IMR-90 (cell line): ENCODE measurements at regions of chr9 and their contacts with region 1.

Region 1: GRCh38 chr9:91193658-91194391 is 167.9 kb downstream of the AUH start:
- DNase-seq: peak; percentile 96
- ATAC-seq: peak; percentile 61
- H3K4me3 ChIP-seq: peak overlapping the region; percentile 15
- H3K27ac ChIP-seq: peak overlapping the region; percentile 94
- H3K4me1 ChIP-seq: peaks cover 37% of the 10 kb centered on the region
- H3K27me3 ChIP-seq: no peaks in the 10 kb centered on the region
- CTCF ChIP-seq: no peak
- POLR2A ChIP-seq: peak; percentile 64
- RAD21 ChIP-seq: peak; percentile 4

Region 2: GRCh38 chr9:91060503-91061343 is 133.1 kb before region 1 on chr9:
- CTCF ChIA-PET with region 1: no interaction called
- POLR2A ChIA-PET with region 1: no interaction called
- dilution Hi-C with region 1: no loop called
- in situ Hi-C with region 1: no loop called
- intact Hi-C with region 1: loop called (anchors 1 kb)
- DNase-seq: peak; percentile 99
- ATAC-seq: peak; percentile 68
- H3K4me3 ChIP-seq: no peak overlapping the region; the same call in 1 of the 2 replicates
- H3K27ac ChIP-seq: peak overlapping the region; percentile 89
- H3K4me1 ChIP-seq: peaks cover 26% of the 10 kb centered on the region
- H3K27me3 ChIP-seq: no peaks in the 10 kb centered on the region
- CTCF ChIP-seq: no peak
- POLR2A ChIP-seq: peak; percentile 55
- RAD21 ChIP-seq: no peak; the same call in 1 of the 2 replicates

Region 3: DNA sequence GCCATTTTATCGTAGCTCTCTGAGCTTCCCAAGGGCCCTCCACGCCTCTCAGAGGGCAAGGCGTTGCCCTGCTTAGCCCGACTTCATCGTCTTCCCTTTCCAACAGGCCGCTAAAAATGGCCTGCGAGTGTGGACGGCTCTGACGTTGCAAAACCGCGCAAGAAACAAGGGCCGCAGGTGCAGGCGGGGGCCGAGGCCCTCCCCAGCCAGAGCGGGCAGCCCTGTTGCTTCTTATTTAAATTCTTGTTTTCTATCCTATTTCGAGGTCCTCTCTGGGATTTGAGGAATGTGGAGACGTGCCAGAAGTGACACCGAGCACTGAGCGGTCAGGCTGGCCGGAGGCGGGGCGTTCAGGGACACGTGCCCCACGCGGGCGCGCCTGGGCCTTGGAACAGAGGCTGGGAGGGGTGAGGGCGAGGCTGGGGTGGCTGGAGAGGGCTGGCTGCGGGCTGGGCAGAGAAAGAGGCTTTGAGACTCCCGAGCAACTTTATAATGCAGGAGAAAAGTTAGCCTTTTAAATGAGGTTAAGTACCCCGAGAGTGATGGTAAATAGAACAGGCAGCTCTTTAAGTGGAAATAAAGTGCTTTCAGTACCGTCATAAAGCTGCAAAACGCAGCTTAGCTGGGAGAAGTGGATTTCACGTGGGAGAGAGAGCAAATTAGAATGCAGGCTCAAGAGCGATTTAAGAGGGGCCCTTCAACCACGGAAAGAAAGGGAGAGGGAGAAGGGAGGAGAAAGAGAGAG is 75.7 kb before region 1 on chr9:
- CTCF ChIA-PET with region 1: no interaction called
- POLR2A ChIA-PET with region 1: no interaction called
- dilution Hi-C with region 1: no loop called
- in situ Hi-C with region 1: no loop called
- intact Hi-C with region 1: loop called (anchors 2 kb)
- DNase-seq: peak; percentile 82
- ATAC-seq: peak; percentile 86
- H3K4me3 ChIP-seq: no peak overlapping the region
- H3K27ac ChIP-seq: peak overlapping the region; percentile 99
- H3K4me1 ChIP-seq: peaks cover 21% of the 10 kb centered on the region
- H3K27me3 ChIP-seq: no peaks in the 10 kb centered on the region
- CTCF ChIP-seq: no peak
- POLR2A ChIP-seq: no peak
- RAD21 ChIP-seq: no peak

Region 4: GRCh38 chr9:91131433-91131839 is 62.4 kb before region 1 on chr9:
- CTCF ChIA-PET with region 1: interaction called, 3 read pairs
- POLR2A ChIA-PET with region 1: no interaction called
- dilution Hi-C with region 1: no loop called
- in situ Hi-C with region 1: loop called (anchors 5 kb)
- intact Hi-C with region 1: loop called (anchors 5 kb)
- DNase-seq: peak; percentile 100
- ATAC-seq: peak; percentile 85
- H3K4me3 ChIP-seq: no peak overlapping the region
- H3K27ac ChIP-seq: peak overlapping the region; percentile 91
- H3K4me1 ChIP-seq: peaks cover 21% of the 10 kb centered on the region
- H3K27me3 ChIP-seq: no peaks in the 10 kb centered on the region
- CTCF ChIP-seq: no peak
- POLR2A ChIP-seq: peak; percentile 87
- RAD21 ChIP-seq: peak; percentile 31; the same call in 1 of the 2 replicates

Region 5: DNA sequence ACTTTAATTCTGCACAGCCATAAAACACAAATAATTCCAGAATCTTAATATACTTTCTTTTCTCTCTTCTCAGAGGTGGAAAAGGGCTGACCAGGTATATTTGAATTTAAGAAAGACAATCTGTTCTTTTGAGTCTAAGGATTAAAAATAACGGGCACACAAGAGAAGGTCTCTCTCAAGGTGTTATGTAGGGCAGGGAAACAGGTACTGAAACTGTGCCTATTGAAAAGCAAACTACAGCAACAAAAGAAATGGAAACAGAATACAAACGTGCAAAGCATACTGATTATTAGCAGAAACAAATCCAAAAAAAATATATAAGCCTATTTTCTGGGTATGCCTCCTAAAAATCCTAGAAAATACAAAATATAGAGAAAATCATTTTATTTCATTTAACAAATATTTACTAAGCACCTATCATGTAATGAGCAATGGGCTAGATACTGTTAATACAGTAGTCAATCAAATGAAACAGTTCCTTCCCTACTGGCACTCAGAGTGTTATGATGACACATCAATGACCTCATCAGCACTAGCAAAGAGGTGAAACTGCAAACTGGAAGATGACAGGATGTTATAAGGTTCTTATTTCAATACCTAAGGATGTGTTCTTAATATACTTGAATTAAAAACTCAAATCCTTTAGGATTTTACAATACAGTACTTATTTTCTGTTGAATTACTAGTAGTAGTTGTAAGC is 80.2 kb after region 1 on chr9:
- CTCF ChIA-PET with region 1: no interaction called
- POLR2A ChIA-PET with region 1: no interaction called
- dilution Hi-C with region 1: no loop called
- in situ Hi-C with region 1: no loop called
- intact Hi-C with region 1: no loop called
- DNase-seq: peak; percentile 80
- ATAC-seq: no peak
- H3K4me3 ChIP-seq: no peak overlapping the region
- H3K27ac ChIP-seq: no peak overlapping the region
- H3K4me1 ChIP-seq: no peaks in the 10 kb centered on the region
- H3K27me3 ChIP-seq: no peaks in the 10 kb centered on the region
- CTCF ChIP-seq: no peak
- POLR2A ChIP-seq: no peak
- RAD21 ChIP-seq: no peak